Calu3 (cell line): ENCODE measurements at regions of chr14 and their contacts with region 1.

Region 1: GRCh38 chr14:104647467-104648043 is 41.9 kb upstream of the INF2 start:
- DNase-seq: no peak
- H3K4me3 Mint-ChIP-seq: no peak overlapping the region
- H3K27ac Mint-ChIP-seq: peak overlapping the region; percentile 34
- H3K4me1 Mint-ChIP-seq: no peaks in the 10 kb centered on the region
- H3K27me3 Mint-ChIP-seq: peaks cover 19% of the 10 kb centered on the region
- CTCF ChIP-seq: no peak

Region 2: DNA sequence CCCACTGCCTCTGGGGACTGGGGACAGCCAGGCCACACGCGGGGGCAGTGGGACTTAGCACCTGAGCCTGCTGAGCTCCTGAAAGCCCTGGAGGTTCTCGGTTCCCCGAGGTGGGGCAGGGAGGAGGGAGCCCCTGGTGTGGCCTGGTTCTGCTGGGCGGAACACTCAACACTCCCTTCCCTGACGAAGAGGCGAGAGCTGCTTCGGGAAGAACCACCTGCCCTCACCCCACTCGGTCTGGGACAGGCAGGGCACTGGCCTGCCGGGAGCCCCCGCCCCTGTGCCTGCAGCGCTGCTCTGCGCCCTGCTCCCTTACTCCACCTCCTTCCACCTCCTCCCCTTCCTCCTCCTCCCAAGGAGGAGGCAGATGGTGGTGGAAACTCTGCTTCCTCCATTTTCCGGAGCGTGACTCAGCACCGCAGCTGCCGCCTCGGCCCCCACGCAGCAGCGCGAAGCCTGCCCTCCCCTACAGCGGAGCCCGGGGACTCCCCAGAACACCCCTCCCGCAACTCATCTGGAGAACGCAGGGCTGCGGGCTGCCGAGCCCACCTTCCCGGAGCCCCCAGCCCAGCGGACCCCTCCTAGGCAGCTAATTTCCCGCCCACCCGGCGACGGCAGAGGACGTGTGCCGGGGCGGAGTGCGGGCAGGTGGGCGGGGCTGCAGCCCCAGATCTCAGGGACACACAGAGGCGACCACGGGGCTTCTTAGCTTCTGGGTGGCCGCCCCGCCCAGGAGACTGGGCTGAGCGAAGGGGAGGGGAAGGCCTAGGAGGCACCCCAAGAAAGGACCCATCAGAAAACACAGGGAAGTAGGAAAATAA is 30.2 kb after region 1 on chr14:
- CTCF ChIA-PET with region 1: interaction called, 9 read pairs
- intact Hi-C with region 1: loop called (anchors 5 kb)
- DNase-seq: peak; percentile 74
- H3K4me3 Mint-ChIP-seq: peak overlapping the region; percentile 73
- H3K27ac Mint-ChIP-seq: peak overlapping the region; percentile 90
- H3K4me1 Mint-ChIP-seq: peaks cover 43% of the 10 kb centered on the region
- H3K27me3 Mint-ChIP-seq: no peaks in the 10 kb centered on the region
- CTCF ChIP-seq: no peak